ENCODE measurements at regions of chr12 and their contacts with region 1.

Region 1: GRCh38 chr12:96285158-96285557 is 91.0 kb downstream of the ELK3 start:
- DNase-seq: no peak
- ATAC-seq: no peak
- H3K4me3 ChIP-seq: no peak overlapping the region
- H3K4me3 Mint-ChIP-seq: no peak overlapping the region
- H3K27ac ChIP-seq: no peak overlapping the region
- H3K27ac Mint-ChIP-seq: peak overlapping the region in 6 of 9 donors; percentile 0 to 60 (median 46)
- H3K4me1 ChIP-seq: no peaks in the 10 kb centered on the region
- H3K4me1 Mint-ChIP-seq: peaks cover 4 to 30% (median 22%) of the 10 kb centered on the region in 7 donors
- H3K27me3 ChIP-seq: no peaks in the 10 kb centered on the region
- H3K27me3 Mint-ChIP-seq: no peaks in the 10 kb centered on the region

Region 2: DNA sequence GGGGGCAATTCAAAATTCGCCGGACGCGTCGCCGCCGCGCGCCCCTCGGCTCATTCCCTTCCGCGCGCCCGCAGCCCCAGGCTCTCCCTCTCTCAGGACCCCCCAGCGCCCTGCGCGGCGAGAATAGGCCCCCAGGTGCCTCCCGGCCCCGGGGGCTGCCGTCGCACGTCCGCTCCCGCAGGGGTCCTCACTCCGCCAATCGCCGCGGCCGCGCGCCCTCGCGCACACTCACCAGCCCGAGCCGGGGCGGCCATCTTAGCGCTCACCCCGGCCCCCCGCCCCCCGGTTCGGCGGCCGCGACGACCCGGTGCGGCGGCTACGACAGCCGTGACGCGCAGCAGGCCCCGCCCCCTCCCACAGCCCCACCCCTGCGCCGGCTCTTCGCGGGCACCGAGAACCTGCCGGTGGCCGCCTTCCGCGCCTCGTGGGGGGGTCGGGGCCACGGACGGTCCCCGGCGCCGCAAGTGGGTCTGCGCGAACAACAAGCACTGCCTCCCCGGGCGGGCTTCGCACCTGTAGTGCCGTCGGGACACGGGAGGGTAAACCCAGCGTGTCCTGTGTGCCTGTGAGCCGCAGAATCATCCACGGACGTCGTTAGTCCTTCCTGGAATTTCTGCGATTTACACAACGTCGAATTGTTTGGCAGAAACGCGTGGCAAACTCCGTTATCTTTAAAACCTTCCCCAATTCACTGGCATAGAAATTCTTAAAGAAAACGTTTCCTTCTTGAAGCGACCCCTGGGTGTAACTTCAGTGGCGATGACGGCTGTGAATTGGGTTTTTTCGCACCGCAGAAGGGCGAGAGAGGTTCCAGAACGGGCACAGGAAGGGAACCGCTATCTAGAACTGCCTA is 736.4 kb before region 1 on chr12:
- CTCF ChIA-PET with region 1: no interaction called
- POLR2A ChIA-PET with region 1: no interaction called
- intact Hi-C with region 1: no loop called
- DNase-seq: peak; percentile 66 to 81 (median 77)
- ATAC-seq: peak; percentile 94
- H3K4me3 ChIP-seq: peak overlapping the region; percentile 75
- H3K4me3 Mint-ChIP-seq: peak overlapping the region; percentile 89 to 96 (median 94)
- H3K27ac ChIP-seq: peak overlapping the region; percentile 96
- H3K27ac Mint-ChIP-seq: peak overlapping the region; percentile 70 to 98 (median 94)
- H3K4me1 ChIP-seq: peaks cover 6 to 23% of the 10 kb centered on the region in 2 donors
- H3K4me1 Mint-ChIP-seq: peaks cover 36 to 73% (median 61%) of the 10 kb centered on the region in 7 donors
- H3K27me3 ChIP-seq: no peaks in the 10 kb centered on the region
- H3K27me3 Mint-ChIP-seq: peaks cover 0 to 22% (median 7%) of the 10 kb centered on the region in 5 donors

Region 3: GRCh38 chr12:95784286-95784685 is 500.9 kb before region 1 on chr12:
- CTCF ChIA-PET with region 1: no interaction called
- POLR2A ChIA-PET with region 1: no interaction called
- intact Hi-C with region 1: no loop called
- DNase-seq: no peak
- ATAC-seq: no peak
- H3K4me3 ChIP-seq: no peak overlapping the region
- H3K4me3 Mint-ChIP-seq: no peak overlapping the region
- H3K27ac ChIP-seq: no peak overlapping the region
- H3K27ac Mint-ChIP-seq: no peak overlapping the region
- H3K4me1 ChIP-seq: peaks cover 0 to 3% of the 10 kb centered on the region in 2 donors
- H3K4me1 Mint-ChIP-seq: peaks cover 0 to 6% (median 3%) of the 10 kb centered on the region in 7 donors
- H3K27me3 ChIP-seq: peaks cover 0 to 4% of the 10 kb centered on the region in 2 donors
- H3K27me3 Mint-ChIP-seq: peaks cover 37 to 58% (median 43%) of the 10 kb centered on the region in 5 donors

Region 4: DNA sequence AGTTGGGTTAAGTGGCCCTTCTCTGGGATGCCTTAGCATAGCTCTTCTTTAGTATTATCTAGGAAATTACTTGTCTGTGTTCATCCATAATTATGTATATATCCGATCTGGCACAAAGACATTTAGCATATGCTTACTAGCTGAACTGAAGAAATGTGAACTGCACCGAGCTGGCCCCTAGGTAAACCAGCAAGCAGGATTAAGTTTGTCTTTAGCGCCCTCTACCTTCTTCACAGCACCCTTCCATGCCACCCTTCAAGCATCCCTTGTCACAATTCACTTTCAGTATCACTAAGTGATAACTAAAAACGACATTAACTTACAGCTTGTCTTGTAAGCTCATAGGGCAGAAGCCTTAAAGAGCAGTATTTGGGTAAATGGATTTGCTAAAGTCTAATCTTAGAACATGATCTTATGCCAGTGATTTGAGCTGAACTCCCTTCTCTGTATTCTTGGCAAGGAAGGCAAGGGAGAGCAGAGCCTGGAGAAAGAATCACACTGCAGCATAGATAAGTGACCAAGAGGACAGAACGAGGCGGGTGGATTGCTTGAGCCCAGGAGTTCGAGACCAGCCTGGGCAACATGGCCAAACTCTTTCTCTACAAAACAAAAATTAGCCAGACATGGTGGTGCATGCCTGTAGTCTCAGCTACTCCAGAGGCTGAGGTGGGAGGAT is 286.4 kb before region 1 on chr12:
- CTCF ChIA-PET with region 1: no interaction called
- POLR2A ChIA-PET with region 1: no interaction called
- intact Hi-C with region 1: no loop called
- DNase-seq: peak in 7 of 9 donors; percentile 44 to 69 (median 58)
- ATAC-seq: peak; percentile 96
- H3K4me3 ChIP-seq: no peak overlapping the region
- H3K4me3 Mint-ChIP-seq: peak overlapping the region in 1 of 10 donors; percentile 11
- H3K27ac ChIP-seq: no peak overlapping the region
- H3K27ac Mint-ChIP-seq: peak overlapping the region in 5 of 9 donors; percentile 2 to 68 (median 16)
- H3K4me1 ChIP-seq: no peaks in the 10 kb centered on the region
- H3K4me1 Mint-ChIP-seq: peaks cover 0 to 13% (median 3%) of the 10 kb centered on the region in 7 donors
- H3K27me3 ChIP-seq: no peaks in the 10 kb centered on the region
- H3K27me3 Mint-ChIP-seq: no peaks in the 10 kb centered on the region

Region 5: GRCh38 chr12:96258104-96258961 is 26.8 kb before region 1 on chr12:
- CTCF ChIA-PET with region 1: no interaction called
- POLR2A ChIA-PET with region 1: no interaction called
- intact Hi-C with region 1: no loop called
- DNase-seq: peak in 5 of 9 donors; percentile 21 to 44 (median 24)
- ATAC-seq: peak; percentile 77
- H3K4me3 ChIP-seq: no peak overlapping the region
- H3K4me3 Mint-ChIP-seq: peak overlapping the region in 1 of 10 donors; percentile 9
- H3K27ac ChIP-seq: peak overlapping the region; percentile 38
- H3K27ac Mint-ChIP-seq: no peak overlapping the region
- H3K4me1 ChIP-seq: peaks cover 0 to 5% of the 10 kb centered on the region in 2 donors
- H3K4me1 Mint-ChIP-seq: peaks cover 9 to 18% (median 15%) of the 10 kb centered on the region in 7 donors
- H3K27me3 ChIP-seq: no peaks in the 10 kb centered on the region
- H3K27me3 Mint-ChIP-seq: no peaks in the 10 kb centered on the region

Region 6: DNA sequence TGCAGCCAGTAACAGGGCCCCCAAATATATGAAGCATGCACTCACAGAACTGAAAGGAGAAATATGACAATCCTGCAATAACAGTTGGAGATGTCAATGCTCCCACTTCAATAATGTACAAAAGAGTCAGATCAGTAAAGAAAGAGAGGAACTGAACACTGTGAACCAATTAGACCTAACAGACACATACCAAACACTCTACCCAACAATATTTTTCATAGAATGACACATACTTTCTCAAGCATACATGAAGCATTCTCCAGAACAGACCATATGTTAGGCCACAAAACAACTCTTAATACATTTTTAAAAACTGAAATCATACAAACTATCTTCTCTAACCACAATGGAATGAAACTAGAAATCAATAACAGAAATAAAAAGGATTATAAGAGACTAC is 10.8 kb before region 1 on chr12:
- CTCF ChIA-PET with region 1: no interaction called
- POLR2A ChIA-PET with region 1: interaction called, 3 read pairs
- intact Hi-C with region 1: loop called in 1 of 2 experiments (anchors 2 kb)
- DNase-seq: no peak
- ATAC-seq: no peak
- H3K4me3 ChIP-seq: no peak overlapping the region
- H3K4me3 Mint-ChIP-seq: no peak overlapping the region
- H3K27ac ChIP-seq: no peak overlapping the region
- H3K27ac Mint-ChIP-seq: peak overlapping the region in 8 of 9 donors; percentile 26 to 82 (median 52)
- H3K4me1 ChIP-seq: no peaks in the 10 kb centered on the region
- H3K4me1 Mint-ChIP-seq: peaks cover 8 to 35% (median 28%) of the 10 kb centered on the region in 7 donors
- H3K27me3 ChIP-seq: no peaks in the 10 kb centered on the region
- H3K27me3 Mint-ChIP-seq: no peaks in the 10 kb centered on the region

Region 7: GRCh38 chr12:96303653-96304052 is 18.5 kb after region 1 on chr12:
- CTCF ChIA-PET with region 1: no interaction called
- POLR2A ChIA-PET with region 1: no interaction called
- intact Hi-C with region 1: loop called in 1 of 2 experiments (anchors 2 kb)
- DNase-seq: no peak
- ATAC-seq: no peak
- H3K4me3 ChIP-seq: no peak overlapping the region
- H3K4me3 Mint-ChIP-seq: no peak overlapping the region
- H3K27ac ChIP-seq: no peak overlapping the region
- H3K27ac Mint-ChIP-seq: no peak overlapping the region
- H3K4me1 ChIP-seq: no peaks in the 10 kb centered on the region
- H3K4me1 Mint-ChIP-seq: peaks cover 8 to 45% (median 30%) of the 10 kb centered on the region in 7 donors
- H3K27me3 ChIP-seq: no peaks in the 10 kb centered on the region
- H3K27me3 Mint-ChIP-seq: no peaks in the 10 kb centered on the region